Heart right ventricle (tissue), 16 donors: ENCODE measurements at regions of chr2 and their contacts with region 1.

Region 1: GRCh38 chr2:7203055-7203467 is 285.8 kb downstream of the RNF144A start:
- DNase-seq: peak in 1 of 2 donors; percentile 38
- ATAC-seq: peak in 5 of 8 donors; percentile 34 to 64 (median 51)
- H3K4me3 ChIP-seq: no peak overlapping the region
- H3K27ac ChIP-seq: no peak overlapping the region
- H3K4me1 ChIP-seq: no peaks in the 10 kb centered on the region
- H3K27me3 ChIP-seq: no peaks in the 10 kb centered on the region
- CTCF ChIP-seq: peak; percentile 71 to 96 (median 89)

Region 2: DNA sequence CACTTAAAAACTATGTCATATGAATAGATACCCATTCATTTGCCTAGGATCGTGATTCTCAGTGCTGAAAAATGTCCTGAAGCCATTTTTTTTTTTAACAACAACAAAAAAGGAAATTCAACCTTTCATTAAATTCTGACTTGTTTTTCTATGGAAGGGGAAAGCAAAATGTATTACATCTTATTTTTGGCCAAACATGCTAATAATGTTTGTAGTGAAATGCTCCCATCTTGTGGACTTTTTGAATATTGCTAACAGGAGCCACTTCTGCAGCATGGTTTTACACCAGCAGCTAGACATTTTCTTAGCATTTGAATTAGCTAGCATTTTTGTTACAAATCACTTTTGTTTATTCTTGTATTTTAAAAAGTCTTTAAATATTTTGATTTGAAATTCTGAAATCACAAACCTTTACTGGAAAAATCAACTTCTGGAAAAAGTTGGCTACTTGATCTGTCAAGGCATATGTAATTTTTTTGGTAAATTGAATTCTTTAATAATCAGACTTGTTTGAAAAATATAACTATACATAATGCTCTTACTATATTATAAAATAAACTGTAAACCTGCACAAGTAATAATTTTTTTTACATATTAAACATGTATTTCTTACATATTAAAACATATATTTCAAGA is 1558.6 kb after region 1 on chr2:
- intact Hi-C with region 1: loop called in 2 of 10 experiments (anchors 5 to 10 kb)
- DNase-seq: no peak
- ATAC-seq: no peak
- H3K4me3 ChIP-seq: no peak overlapping the region
- H3K27ac ChIP-seq: no peak overlapping the region
- H3K4me1 ChIP-seq: peaks cover 0 to 14% (median 0%) of the 10 kb centered on the region in 9 donors
- H3K27me3 ChIP-seq: no peaks in the 10 kb centered on the region
- CTCF ChIP-seq: peak; percentile 5 to 71 (median 58)